ENCODE measurements at regions of chr6 and their contacts with region 1.

Region 1: GRCh38 chr6:118968416-118968815 is 33.5 kb upstream of the MCM9 start:
- DNase-seq: peak in 2 of 5 donors; percentile 41 to 74
- H3K4me3 ChIP-seq: no peak overlapping the region
- H3K27ac ChIP-seq: no peak overlapping the region
- H3K4me1 ChIP-seq: no peaks in the 10 kb centered on the region
- H3K27me3 ChIP-seq: no peaks in the 10 kb centered on the region
- CTCF ChIP-seq: peak; percentile 31

Region 2: DNA sequence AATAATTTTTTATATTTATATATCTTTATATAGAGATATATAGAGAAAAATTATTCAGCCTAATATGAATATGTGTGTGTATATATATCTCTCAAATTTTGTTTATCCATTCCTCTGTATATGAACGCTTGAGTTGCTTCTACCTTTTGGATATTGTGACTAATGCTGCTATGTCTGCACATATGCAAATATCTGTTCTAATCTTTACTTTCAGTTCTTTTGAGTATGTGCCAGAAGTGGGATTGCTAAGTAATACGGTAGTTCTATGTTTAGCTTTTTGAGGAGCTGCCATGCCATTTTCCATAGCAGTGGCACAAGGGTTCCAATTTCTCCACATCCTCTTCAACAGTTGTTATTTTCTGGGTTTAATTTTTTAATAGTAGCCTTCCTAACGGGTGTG is 244.2 kb before region 1 on chr6:
- intact Hi-C with region 1: no loop called
- DNase-seq: no peak
- H3K4me3 ChIP-seq: no peak overlapping the region
- H3K27ac ChIP-seq: no peak overlapping the region
- H3K4me1 ChIP-seq: no peaks in the 10 kb centered on the region
- H3K27me3 ChIP-seq: no peaks in the 10 kb centered on the region
- CTCF ChIP-seq: no peak

Region 3: DNA sequence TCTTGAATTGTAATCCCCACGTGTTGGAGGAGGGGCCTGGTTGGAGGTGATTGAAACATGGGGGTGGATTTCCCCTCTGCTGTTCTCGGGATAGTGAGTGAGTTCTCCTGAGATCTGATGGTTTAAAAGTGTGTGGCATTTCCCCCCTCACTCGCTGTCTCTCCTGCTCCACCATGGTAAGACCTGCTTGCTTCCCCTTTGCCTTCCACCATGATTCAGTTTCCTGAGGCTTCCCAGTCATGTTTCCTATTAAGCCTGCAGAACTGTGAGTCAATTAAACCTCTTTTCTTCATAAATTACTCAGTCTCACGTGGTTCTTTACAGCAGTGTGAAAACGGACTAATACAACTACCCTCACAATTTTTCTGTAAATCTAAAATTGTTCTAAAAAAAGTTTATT is 136.9 kb after region 1 on chr6:
- intact Hi-C with region 1: loop called (anchors 5 kb)
- DNase-seq: no peak
- H3K4me3 ChIP-seq: no peak overlapping the region
- H3K27ac ChIP-seq: no peak overlapping the region
- H3K4me1 ChIP-seq: no peaks in the 10 kb centered on the region
- H3K27me3 ChIP-seq: no peaks in the 10 kb centered on the region
- CTCF ChIP-seq: no peak

Region 4: DNA sequence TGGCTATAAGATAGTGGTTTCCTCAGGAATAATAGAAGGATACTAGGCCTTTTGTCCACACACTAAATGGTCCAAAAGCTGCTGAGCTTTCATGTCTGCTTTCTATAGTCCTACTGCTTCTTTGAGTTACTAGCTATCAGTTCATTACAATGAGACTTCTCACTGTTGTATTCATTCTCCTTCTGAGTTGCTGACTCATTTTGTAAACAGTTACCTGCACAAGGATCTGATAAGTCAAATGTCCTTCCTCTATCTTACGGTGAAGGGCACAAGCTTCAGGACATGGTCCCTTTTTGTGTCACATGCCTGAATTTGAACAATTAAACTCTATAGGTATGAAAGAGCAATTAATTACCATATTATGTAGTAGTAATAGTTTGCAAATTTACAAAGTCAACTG is 290.6 kb after region 1 on chr6:
- intact Hi-C with region 1: no loop called
- DNase-seq: no peak
- H3K4me3 ChIP-seq: no peak overlapping the region
- H3K27ac ChIP-seq: no peak overlapping the region
- H3K4me1 ChIP-seq: peaks cover 0 to 6% (median 0%) of the 10 kb centered on the region in 3 donors
- H3K27me3 ChIP-seq: no peaks in the 10 kb centered on the region
- CTCF ChIP-seq: no peak

Measured in kidney (tissue), 22 donors.